Mammary epithelial cell (primary cell): ENCODE measurements at regions of chr4 and their contacts with region 1.

Region 1: DNA sequence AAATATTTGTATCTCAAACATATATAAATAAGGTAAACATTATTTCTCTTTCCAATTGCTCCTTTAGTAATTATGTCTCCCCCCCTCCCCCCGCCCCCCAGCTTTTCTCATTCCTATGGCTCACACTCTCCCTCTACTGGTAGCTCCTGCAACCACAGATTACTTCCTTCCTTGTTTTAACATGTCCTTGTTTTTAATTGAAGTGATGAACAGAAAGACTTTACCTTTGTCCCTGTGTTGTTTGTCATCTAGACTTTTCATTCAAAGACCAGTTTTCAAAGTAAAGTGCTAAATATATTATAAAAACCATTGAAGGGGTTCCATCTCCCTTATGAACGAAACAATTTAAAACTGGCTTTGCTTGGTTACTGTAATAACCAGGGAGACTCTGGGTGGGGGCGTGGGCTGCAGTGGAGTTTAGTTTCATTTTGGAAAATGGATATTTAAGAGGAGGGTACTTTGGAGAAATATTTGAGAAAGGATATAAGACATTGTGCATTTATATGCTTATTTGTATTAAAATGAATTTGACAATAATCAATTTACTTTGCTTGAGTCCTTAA is 352.9 kb downstream of the RAPGEF2 start:
- DNase-seq: peak; percentile 32
- H3K4me3 ChIP-seq: peak overlapping the region in 2 of 3 experiments; percentile 23 to 30
- H3K27ac ChIP-seq: peak overlapping the region; percentile 12
- H3K4me1 ChIP-seq: no peaks in the 10 kb centered on the region
- H3K27me3 ChIP-seq: no peaks in the 10 kb centered on the region
- CTCF ChIP-seq: peak; percentile 72 to 79

Region 2: DNA sequence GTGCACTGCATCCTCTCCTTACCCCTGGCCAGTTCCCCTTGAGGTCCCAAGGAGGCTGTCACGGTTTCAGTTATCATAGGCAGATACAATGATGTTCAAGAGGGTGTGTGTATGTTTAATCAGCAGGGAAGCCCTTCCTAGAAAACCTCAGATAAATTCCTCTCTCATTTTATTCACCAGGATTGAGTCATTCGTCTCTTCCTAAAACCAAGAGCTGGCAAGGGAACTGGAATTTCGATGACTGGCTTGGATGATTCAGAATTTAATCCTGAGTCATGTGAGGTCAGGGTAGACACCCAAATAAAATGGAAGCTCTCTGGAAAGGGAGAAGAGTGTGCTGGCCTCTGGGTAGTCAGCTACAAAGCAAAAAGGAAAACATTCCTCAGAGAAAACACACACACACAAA is 459.1 kb before region 1 on chr4:
- CTCF ChIA-PET with region 1: interaction called, 14 read pairs
- dilution Hi-C with region 1: no loop called
- in situ Hi-C with region 1: no loop called
- intact Hi-C with region 1: no loop called
- DNase-seq: peak; percentile 99
- H3K4me3 ChIP-seq: no peak overlapping the region
- H3K27ac ChIP-seq: peak overlapping the region; percentile 82
- H3K4me1 ChIP-seq: peaks cover 22% of the 10 kb centered on the region
- H3K27me3 ChIP-seq: no peaks in the 10 kb centered on the region
- CTCF ChIP-seq: no peak

Region 3: GRCh38 chr4:159086611-159087010 is 369.1 kb before region 1 on chr4:
- CTCF ChIA-PET with region 1: no interaction called
- dilution Hi-C with region 1: no loop called
- in situ Hi-C with region 1: no loop called
- intact Hi-C with region 1: no loop called
- DNase-seq: no peak
- H3K4me3 ChIP-seq: no peak overlapping the region
- H3K27ac ChIP-seq: no peak overlapping the region
- H3K4me1 ChIP-seq: no peaks in the 10 kb centered on the region
- H3K27me3 ChIP-seq: no peaks in the 10 kb centered on the region
- CTCF ChIP-seq: no peak

Region 4: DNA sequence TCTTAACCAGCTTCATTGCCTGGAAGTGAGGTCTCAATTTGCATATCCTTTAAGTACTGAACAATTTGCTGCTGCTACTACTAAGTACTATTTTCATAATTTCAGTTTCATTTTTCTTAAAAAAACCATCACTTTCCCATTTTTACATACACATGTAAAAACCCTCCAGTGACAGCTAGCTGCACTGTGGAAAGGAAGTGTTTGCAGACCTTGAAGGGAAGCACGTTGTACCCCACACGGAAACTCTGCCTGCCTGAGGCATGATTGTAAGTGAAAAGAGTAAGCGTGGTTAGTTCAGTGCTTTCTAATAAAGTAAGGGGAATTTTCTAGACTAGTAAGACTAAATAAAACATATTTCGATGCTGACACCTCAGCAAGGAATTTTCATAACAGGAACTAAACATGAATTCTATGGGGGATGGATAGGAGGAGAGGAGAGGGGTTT is 249.3 kb before region 1 on chr4:
- CTCF ChIA-PET with region 1: no interaction called
- dilution Hi-C with region 1: no loop called
- in situ Hi-C with region 1: no loop called
- intact Hi-C with region 1: loop called (anchors 1 kb)
- DNase-seq: peak; percentile 60
- H3K4me3 ChIP-seq: peak overlapping the region in 1 of 3 experiments; percentile 20
- H3K27ac ChIP-seq: peak overlapping the region; percentile 20
- H3K4me1 ChIP-seq: peaks cover 7% of the 10 kb centered on the region
- H3K27me3 ChIP-seq: no peaks in the 10 kb centered on the region
- CTCF ChIP-seq: no peak

Region 5: DNA sequence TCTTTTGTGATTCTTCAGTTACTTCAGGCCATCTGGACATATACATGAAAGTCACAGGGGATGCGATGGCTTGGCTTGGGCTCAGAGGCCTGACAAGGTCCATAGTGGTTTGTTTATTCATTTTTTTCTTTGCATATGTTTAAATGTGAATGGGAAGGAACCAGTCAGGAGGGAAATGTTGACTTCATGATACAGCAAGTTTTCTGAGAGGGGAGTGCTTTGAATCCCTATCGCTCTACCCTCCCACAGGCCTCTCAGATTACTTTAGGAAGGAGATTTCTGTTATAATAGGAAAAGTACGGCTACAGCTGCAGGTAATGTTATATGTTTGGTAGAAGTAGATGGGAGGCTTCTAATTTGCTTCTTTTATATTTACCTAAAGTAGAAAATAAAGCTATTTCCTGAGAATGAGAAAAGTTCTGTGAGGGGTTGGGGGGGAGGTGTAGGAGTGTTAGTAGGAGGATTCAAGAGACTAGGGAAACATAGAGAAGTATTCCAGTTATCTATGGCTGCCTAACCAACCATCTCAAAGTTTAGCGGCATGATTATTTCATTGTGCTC is 29.9 kb before region 1 on chr4:
- CTCF ChIA-PET with region 1: interaction called, 20 read pairs
- dilution Hi-C with region 1: no loop called
- in situ Hi-C with region 1: no loop called
- intact Hi-C with region 1: no loop called
- DNase-seq: no peak
- H3K4me3 ChIP-seq: no peak overlapping the region
- H3K27ac ChIP-seq: no peak overlapping the region
- H3K4me1 ChIP-seq: no peaks in the 10 kb centered on the region
- H3K27me3 ChIP-seq: no peaks in the 10 kb centered on the region
- CTCF ChIP-seq: no peak